A673 (cell line): ENCODE measurements at regions of chr3 and their contacts with region 1.

Region 1: DNA sequence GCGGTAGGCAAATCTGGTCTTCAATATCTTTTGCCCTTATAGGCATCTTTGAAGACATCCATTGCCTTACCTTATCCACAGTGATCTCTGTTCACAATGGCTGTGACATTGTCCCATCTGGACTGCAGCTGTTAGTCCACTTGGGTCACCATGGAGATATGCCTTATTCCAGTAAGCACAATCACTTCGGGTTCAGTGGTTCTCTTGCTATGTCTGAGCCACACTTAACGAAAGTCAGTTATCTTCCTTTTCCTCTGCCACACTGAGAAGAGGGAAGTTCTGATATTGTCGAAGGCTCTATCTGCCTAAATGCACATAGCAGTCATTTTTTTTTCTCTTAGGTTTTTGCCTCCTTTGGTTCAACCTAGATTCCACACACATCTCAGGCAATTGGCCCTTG is 119.0 kb upstream of the SATB1 start:
- DNase-seq: no peak
- H3K4me3 ChIP-seq: no peak overlapping the region
- H3K27ac ChIP-seq: no peak overlapping the region
- H3K4me1 ChIP-seq: no peaks in the 10 kb centered on the region
- H3K27me3 ChIP-seq: no peaks in the 10 kb centered on the region
- CTCF ChIP-seq: no peak

Region 2: GRCh38 chr3:18712713-18713576 is 168.8 kb after region 1 on chr3:
- CTCF ChIA-PET with region 1: no interaction called
- POLR2A ChIA-PET with region 1: interaction called, 15 read pairs
- intact Hi-C with region 1: no loop called
- DNase-seq: no peak
- H3K4me3 ChIP-seq: no peak overlapping the region
- H3K27ac ChIP-seq: no peak overlapping the region
- H3K4me1 ChIP-seq: no peaks in the 10 kb centered on the region
- H3K27me3 ChIP-seq: no peaks in the 10 kb centered on the region
- CTCF ChIP-seq: no peak